ENCODE measurements at regions of chr3 and their contacts with region 1.

Region 1: DNA sequence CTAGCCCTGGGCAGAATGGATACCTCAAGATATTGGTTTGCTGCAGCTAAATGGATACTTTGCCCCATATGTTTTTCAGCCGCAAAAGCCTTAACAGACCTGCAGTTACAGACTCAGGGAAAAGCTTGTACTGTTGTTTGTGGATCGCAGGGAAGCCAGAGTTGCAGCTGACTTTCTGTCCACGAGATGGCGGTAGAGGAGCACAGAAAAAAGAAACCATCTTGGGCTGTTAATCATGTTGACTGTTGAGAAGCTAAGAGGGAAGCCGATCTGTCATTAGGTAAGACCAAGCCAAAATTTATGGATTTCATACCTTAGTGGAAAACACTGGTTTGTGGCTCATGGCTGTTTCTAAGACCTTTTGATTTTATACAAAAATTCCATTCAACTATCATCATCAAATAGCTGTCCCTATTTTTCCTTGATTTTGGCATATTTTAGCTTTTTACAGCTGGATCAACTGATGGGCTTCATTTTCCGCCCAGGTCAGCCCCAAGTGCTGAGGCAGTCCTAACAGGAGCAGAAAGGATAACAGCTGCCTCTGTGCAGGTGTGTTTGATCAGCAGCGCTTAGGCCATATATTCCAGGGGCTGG is 205.7 kb upstream of the ZPLD1 start:
- DNase-seq: peak; percentile 49 to 80 (median 74)
- ATAC-seq: peak; percentile 89
- H3K4me3 ChIP-seq: no peak overlapping the region
- H3K4me3 Mint-ChIP-seq: no peak overlapping the region
- H3K27ac ChIP-seq: no peak overlapping the region
- H3K27ac Mint-ChIP-seq: no peak overlapping the region
- H3K4me1 ChIP-seq: peaks cover 0 to 6% of the 10 kb centered on the region in 2 donors
- H3K4me1 Mint-ChIP-seq: peaks cover 1 to 27% (median 14%) of the 10 kb centered on the region in 7 donors
- H3K27me3 ChIP-seq: no peaks in the 10 kb centered on the region
- H3K27me3 Mint-ChIP-seq: peaks cover 0 to 25% (median 0%) of the 10 kb centered on the region in 5 donors

Region 2: DNA sequence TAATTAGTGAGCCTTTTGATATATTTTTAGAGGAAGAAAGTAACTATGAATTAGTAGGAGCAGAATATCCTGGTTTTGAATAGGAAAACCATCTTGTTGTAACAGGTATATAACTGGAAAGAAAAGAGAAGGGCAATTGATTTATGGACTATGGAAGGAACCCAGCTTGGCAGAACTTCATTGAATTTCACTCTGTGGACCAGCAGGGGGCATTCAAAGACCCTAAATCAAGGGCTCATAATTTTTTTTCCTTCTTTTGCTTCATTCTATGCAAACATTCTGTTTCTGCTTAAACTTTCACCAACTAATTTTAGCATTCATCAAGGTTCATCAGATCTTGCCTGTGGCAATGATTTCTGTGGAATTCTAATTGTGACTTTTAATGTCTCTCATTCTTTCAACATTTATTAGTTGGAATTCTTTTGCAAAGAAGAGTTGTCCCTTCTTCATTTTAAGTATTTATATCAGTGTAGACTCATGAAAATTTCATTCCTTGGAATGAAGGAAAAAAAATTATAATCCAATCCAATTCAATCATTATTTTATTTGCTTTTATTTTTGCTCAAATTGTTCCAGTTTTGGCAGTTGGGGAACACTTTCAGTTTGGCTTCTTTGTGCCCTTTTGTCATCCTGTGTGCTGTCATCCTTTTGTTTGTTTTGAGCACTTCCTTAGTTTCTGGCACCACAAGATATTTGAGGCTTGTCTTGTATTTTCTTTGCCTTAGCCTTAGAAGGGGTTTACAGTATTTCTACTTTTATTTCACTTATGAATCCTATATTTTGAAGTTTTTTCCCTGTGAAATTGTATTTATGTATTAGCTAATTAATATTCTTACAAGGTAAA is 419.8 kb before region 1 on chr3:
- CTCF ChIA-PET with region 1: interaction called, 423 read pairs
- POLR2A ChIA-PET with region 1: interaction called, 28 read pairs
- intact Hi-C with region 1: loop called (anchors 1 kb)
- DNase-seq: peak in 7 of 9 donors; percentile 31 to 67 (median 57)
- ATAC-seq: peak; percentile 88
- H3K4me3 ChIP-seq: no peak overlapping the region
- H3K4me3 Mint-ChIP-seq: peak overlapping the region in 8 of 10 donors; percentile 23 to 66 (median 60)
- H3K27ac ChIP-seq: peak overlapping the region; percentile 34
- H3K27ac Mint-ChIP-seq: peak overlapping the region; percentile 51 to 93 (median 87)
- H3K4me1 ChIP-seq: peaks cover 0 to 27% of the 10 kb centered on the region in 2 donors
- H3K4me1 Mint-ChIP-seq: peaks cover 11 to 62% (median 54%) of the 10 kb centered on the region in 7 donors
- H3K27me3 ChIP-seq: no peaks in the 10 kb centered on the region
- H3K27me3 Mint-ChIP-seq: no peaks in the 10 kb centered on the region

Region 3: DNA sequence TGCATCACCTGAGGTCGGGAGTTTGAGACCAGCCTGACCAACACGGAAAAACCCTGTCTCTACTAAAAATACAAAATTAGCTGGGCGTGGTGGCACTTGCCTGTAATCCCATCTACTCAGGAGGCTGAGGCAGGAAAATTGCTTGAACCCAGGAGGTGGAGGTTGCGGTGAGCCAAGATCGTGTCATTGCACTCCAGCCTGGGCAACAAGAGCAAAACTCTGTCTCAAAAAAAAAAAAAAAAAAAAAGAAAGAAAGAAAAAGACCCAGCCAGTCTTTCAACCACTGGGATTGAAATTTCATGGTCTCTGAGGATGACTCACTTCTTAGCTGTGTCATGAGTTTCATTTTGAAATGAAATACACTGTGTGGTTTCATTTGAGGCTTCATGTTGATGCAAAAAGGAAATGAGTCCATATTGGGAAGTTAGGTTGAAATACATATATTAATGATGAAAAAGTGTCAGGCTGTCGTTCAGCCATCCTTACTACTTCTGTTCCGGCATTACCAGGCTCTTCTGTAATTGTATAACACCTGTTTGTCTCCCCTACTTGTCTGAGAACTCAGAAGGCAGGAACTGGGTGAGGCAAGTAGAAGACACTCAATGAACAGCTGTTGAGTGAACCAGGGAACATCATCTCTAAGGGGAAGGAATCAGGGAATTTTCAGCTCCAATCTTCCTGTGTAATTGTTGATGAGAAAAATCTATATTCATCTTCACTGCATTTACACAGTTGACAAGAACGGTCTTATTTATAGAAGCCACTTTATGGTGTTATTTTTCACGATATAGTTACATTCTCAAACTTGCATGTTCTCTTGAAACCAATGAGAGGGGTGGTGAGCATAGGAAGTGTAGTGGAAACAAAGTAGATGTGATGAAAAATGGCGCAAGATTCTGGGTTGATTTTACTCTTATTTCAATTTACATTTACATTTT is 292.5 kb before region 1 on chr3:
- CTCF ChIA-PET with region 1: interaction called, 7 read pairs
- POLR2A ChIA-PET with region 1: interaction called, 4 read pairs
- intact Hi-C with region 1: loop called in 1 of 2 experiments (anchors 5 kb)
- DNase-seq: peak in 8 of 9 donors; percentile 34 to 68 (median 58)
- ATAC-seq: peak; percentile 90
- H3K4me3 ChIP-seq: peak overlapping the region; percentile 9
- H3K4me3 Mint-ChIP-seq: peak overlapping the region in 9 of 10 donors; percentile 44 to 77 (median 72)
- H3K27ac ChIP-seq: no peak overlapping the region
- H3K27ac Mint-ChIP-seq: peak overlapping the region; percentile 76 to 91 (median 87)
- H3K4me1 ChIP-seq: peaks cover 28 to 56% of the 10 kb centered on the region in 2 donors
- H3K4me1 Mint-ChIP-seq: peaks cover 15 to 43% (median 30%) of the 10 kb centered on the region in 7 donors
- H3K27me3 ChIP-seq: no peaks in the 10 kb centered on the region
- H3K27me3 Mint-ChIP-seq: peaks cover 0 to 27% (median 0%) of the 10 kb centered on the region in 5 donors

Region 4: GRCh38 chr3:101995371-101996046 is 233.7 kb before region 1 on chr3:
- CTCF ChIA-PET with region 1: interaction called, 3 read pairs
- POLR2A ChIA-PET with region 1: interaction called, 3 read pairs
- intact Hi-C with region 1: loop called in 1 of 2 experiments (anchors 1 kb)
- DNase-seq: no peak
- ATAC-seq: no peak
- H3K4me3 ChIP-seq: no peak overlapping the region
- H3K4me3 Mint-ChIP-seq: peak overlapping the region in 1 of 10 donors; percentile 37
- H3K27ac ChIP-seq: no peak overlapping the region
- H3K27ac Mint-ChIP-seq: peak overlapping the region in 3 of 9 donors; percentile 9 to 68 (median 11)
- H3K4me1 ChIP-seq: peaks cover 0 to 5% of the 10 kb centered on the region in 2 donors
- H3K4me1 Mint-ChIP-seq: peaks cover 6 to 26% (median 17%) of the 10 kb centered on the region in 7 donors
- H3K27me3 ChIP-seq: no peaks in the 10 kb centered on the region
- H3K27me3 Mint-ChIP-seq: peaks cover 0 to 22% (median 0%) of the 10 kb centered on the region in 5 donors

Region 5: DNA sequence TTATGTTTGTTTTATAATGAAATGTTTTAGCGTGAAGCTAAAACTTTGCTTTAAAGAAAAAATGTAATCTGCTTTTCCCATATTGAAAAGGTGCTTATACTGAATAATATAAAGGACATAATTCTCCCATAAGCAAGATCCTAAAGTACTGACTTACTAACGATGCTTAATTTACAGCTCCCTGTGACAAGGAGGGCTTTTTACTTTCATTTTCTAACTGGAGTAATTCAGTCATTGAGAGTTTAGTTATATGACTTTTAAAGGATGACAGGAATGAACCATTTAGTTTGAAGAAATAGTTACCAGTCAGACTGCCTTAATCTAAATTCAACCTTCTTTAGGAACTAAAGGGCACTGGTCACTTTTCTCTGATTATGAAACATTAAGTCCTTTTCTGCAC is 186.4 kb after region 1 on chr3:
- CTCF ChIA-PET with region 1: no interaction called
- POLR2A ChIA-PET with region 1: no interaction called
- intact Hi-C with region 1: no loop called
- DNase-seq: no peak
- ATAC-seq: no peak
- H3K4me3 ChIP-seq: peak overlapping the region; percentile 3
- H3K4me3 Mint-ChIP-seq: peak overlapping the region in 8 of 10 donors; percentile 0 to 71 (median 44)
- H3K27ac ChIP-seq: no peak overlapping the region
- H3K27ac Mint-ChIP-seq: no peak overlapping the region
- H3K4me1 ChIP-seq: no peaks in the 10 kb centered on the region
- H3K4me1 Mint-ChIP-seq: peaks cover 0 to 14% (median 8%) of the 10 kb centered on the region in 7 donors
- H3K27me3 ChIP-seq: no peaks in the 10 kb centered on the region
- H3K27me3 Mint-ChIP-seq: peaks cover 0 to 4% (median 0%) of the 10 kb centered on the region in 5 donors

Region 6: GRCh38 chr3:102536456-102536855 is 307.3 kb after region 1 on chr3:
- CTCF ChIA-PET with region 1: interaction called, 54 read pairs
- POLR2A ChIA-PET with region 1: interaction called, 4 read pairs
- intact Hi-C with region 1: loop called (anchors 1 kb)
- DNase-seq: peak in 6 of 9 donors; percentile 3 to 34 (median 22)
- ATAC-seq: peak; percentile 60
- H3K4me3 ChIP-seq: no peak overlapping the region
- H3K4me3 Mint-ChIP-seq: no peak overlapping the region
- H3K27ac ChIP-seq: no peak overlapping the region
- H3K27ac Mint-ChIP-seq: no peak overlapping the region
- H3K4me1 ChIP-seq: no peaks in the 10 kb centered on the region
- H3K4me1 Mint-ChIP-seq: peaks cover 0 to 6% (median 5%) of the 10 kb centered on the region in 7 donors
- H3K27me3 ChIP-seq: no peaks in the 10 kb centered on the region
- H3K27me3 Mint-ChIP-seq: peaks cover 0 to 11% (median 5%) of the 10 kb centered on the region in 5 donors

Region 7: DNA sequence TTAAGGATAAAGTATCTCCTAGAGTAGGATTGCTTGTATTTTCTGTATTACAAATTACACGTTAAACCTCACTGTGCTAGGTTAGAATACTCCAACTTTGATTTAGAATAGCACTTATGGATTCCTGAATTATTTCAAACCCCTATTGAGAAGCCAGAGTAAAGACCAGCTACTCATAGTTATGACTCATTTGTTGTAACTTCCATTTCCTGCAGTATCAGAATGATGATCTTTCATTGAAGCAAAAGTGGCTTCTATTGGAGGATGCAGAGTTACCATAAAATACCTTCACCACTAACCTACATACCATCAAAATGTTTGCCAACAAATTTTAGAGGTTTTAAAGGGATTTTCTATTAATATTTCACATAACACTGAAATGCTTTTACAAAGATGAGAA is 1814.8 kb after region 1 on chr3:
- CTCF ChIA-PET with region 1: no interaction called
- POLR2A ChIA-PET with region 1: no interaction called
- intact Hi-C with region 1: no loop called
- DNase-seq: no peak
- ATAC-seq: no peak
- H3K4me3 ChIP-seq: no peak overlapping the region
- H3K4me3 Mint-ChIP-seq: no peak overlapping the region
- H3K27ac ChIP-seq: no peak overlapping the region
- H3K27ac Mint-ChIP-seq: no peak overlapping the region
- H3K4me1 ChIP-seq: no peaks in the 10 kb centered on the region
- H3K4me1 Mint-ChIP-seq: no peaks in the 10 kb centered on the region
- H3K27me3 ChIP-seq: no peaks in the 10 kb centered on the region
- H3K27me3 Mint-ChIP-seq: no peaks in the 10 kb centered on the region